ENCODE measurements at regions of chr20 and their contacts with region 1.

Region 1: DNA sequence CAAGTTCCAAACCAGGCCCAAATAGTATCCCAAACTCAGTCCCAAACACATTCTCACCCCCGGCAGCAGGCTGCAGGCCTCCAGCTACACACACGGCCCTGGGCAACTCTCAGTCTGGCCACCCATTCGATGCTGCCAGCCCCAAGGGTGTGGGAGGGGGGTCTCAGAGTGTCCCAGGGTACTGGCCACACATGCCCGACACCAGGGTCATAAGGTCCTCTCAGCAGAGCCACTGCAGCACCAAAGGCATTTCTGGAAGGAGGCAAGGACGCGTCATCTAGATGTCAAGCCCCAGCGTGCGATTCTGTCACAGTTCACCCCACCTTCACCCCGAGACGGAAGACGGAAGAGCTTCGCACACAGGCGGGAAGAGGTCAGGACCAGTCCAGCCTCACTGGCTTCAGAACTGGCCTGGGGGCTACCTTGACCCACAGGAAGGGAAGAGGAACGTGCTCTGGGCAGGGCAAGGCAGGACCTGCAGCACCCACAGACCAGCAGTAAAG is 9.5 kb downstream of the MYL9 start:
- DNase-seq: no peak
- ATAC-seq: no peak
- H3K4me3 ChIP-seq: no peak overlapping the region
- H3K27ac ChIP-seq: peak overlapping the region; percentile 29 to 54 (median 48)
- H3K4me1 ChIP-seq: no peaks in the 10 kb centered on the region
- H3K27me3 ChIP-seq: no peaks in the 10 kb centered on the region
- CTCF ChIP-seq: no peak
- POLR2A ChIP-seq: no peak

Region 2: DNA sequence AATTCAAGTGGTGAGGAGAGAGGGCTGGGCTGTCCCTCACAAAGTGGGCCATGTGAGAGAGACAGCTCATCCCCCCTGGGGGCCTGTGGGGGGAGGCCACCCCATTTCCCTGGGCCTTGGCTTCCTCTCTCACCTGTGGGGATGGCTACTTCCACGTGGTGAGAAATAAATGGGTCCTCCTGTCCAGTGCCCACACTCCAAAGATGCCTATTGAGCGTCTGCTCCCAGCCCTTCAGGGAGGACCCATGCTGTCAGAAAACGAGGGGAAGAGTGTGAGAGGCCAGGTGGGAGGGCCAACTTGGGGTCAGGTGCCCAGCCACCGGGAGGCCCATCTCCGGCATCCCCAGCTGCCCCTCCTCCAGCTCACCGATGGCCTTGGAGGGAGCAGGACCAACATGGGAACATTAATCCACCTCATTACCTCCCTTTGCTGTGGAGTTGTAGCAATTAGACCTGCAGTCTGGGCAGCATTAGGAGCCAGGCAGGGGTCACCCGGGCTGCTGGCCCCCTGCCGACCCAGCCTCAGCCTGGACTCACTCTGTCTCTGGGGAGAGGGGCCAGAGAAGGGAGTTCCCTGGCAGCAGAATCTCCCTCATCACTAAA is 219.7 kb before region 1 on chr20:
- in situ Hi-C with region 1: no loop called
- intact Hi-C with region 1: no loop called
- DNase-seq: no peak
- ATAC-seq: no peak
- H3K4me3 ChIP-seq: no peak overlapping the region
- H3K27ac ChIP-seq: no peak overlapping the region
- H3K4me1 ChIP-seq: no peaks in the 10 kb centered on the region
- H3K27me3 ChIP-seq: peaks cover 17 to 37% (median 19%) of the 10 kb centered on the region in 3 donors
- CTCF ChIP-seq: no peak
- POLR2A ChIP-seq: no peak

Region 3: DNA sequence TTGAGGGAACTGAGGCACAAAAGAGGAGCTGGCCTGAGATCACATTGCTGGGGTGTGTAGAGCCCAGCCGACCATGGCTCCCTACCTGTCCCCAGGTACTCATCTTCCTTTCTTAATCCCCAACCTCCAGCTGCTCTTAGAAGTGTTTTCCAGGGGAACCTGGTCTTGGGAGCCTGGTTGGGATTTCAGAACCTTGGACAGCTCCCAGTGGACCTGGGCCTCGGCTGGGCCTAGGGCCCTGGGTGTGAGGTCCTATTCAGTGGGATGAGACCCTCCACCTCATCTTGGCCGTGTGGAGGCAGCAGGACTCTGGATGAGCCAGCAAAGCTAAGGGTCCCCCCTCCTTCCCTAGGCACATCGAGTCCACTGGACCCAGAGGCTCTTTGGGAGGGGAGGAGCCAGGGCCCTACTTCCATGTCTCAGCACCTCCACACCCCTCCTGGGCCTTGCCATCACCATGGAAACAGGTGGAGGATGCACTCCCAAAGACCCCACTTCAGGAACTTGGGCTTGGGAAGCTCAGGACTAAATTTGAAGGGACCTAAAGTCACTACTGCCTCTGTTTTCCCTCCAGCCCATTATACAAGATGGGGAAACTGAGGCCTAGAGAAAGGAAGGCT is 206.2 kb before region 1 on chr20:
- in situ Hi-C with region 1: no loop called
- intact Hi-C with region 1: no loop called
- DNase-seq: no peak
- ATAC-seq: no peak
- H3K4me3 ChIP-seq: no peak overlapping the region
- H3K27ac ChIP-seq: no peak overlapping the region
- H3K4me1 ChIP-seq: no peaks in the 10 kb centered on the region
- H3K27me3 ChIP-seq: peaks cover 1 to 13% (median 8%) of the 10 kb centered on the region in 3 donors
- CTCF ChIP-seq: no peak
- POLR2A ChIP-seq: no peak

Region 4: DNA sequence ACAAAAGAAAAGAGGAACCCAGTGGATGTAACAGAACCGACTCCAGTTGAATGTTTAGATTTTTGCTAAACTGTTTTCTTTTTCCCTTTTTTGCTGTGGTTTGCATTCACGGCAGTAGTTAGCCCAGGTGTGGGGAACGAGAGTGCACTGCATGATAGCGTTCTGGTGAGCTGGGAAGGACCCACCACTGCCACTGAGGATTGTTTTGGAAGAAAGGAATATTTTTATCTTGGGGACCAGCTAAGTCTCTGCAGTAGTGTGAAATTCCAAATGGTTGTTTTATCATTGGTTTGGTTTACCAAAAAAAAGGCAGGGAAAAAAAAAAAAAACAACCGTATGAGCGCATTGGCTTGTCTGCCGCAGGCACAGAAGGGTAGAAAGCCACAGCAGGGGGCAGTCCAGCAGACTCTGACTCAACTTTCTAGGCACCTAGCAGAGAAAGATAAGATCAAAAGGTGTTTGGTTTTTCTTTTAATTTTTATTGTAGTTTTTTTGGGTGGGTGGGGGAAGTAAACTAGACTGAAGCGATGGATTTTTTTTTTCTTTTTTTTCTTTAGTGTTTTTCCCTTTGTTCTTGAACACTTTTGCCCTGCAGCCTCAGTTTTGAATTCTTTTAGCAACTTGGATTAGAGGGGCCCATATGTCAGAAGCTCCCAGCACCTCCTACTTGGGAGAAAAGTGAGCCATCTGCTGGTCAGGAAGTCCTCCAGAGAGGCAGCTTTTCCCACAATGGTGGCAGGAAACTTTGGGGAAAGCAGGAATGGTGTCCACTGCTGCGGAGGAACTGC is 41.2 kb after region 1 on chr20:
- in situ Hi-C with region 1: no loop called
- intact Hi-C with region 1: loop called (anchors 5 kb)
- DNase-seq: no peak
- ATAC-seq: peak in 1 of 2 donors; percentile 21
- H3K4me3 ChIP-seq: no peak overlapping the region
- H3K27ac ChIP-seq: no peak overlapping the region
- H3K4me1 ChIP-seq: no peaks in the 10 kb centered on the region
- H3K27me3 ChIP-seq: no peaks in the 10 kb centered on the region
- CTCF ChIP-seq: peak in 4 of 5 experiments; percentile 13 to 47 (median 28)
- POLR2A ChIP-seq: no peak

Region 5: GRCh38 chr20:36886859-36887751 is 336.3 kb after region 1 on chr20:
- in situ Hi-C with region 1: no loop called
- intact Hi-C with region 1: loop called (anchors 10 kb)
- DNase-seq: peak; percentile 61 to 70
- ATAC-seq: peak; percentile 70 to 83
- H3K4me3 ChIP-seq: no peak overlapping the region
- H3K27ac ChIP-seq: peak overlapping the region in 1 of 4 donors; percentile 12
- H3K4me1 ChIP-seq: peaks cover 0 to 5% of the 10 kb centered on the region in 2 donors
- H3K27me3 ChIP-seq: no peaks in the 10 kb centered on the region
- CTCF ChIP-seq: peak; percentile 77 to 93 (median 85)
- POLR2A ChIP-seq: no peak

Region 6: DNA sequence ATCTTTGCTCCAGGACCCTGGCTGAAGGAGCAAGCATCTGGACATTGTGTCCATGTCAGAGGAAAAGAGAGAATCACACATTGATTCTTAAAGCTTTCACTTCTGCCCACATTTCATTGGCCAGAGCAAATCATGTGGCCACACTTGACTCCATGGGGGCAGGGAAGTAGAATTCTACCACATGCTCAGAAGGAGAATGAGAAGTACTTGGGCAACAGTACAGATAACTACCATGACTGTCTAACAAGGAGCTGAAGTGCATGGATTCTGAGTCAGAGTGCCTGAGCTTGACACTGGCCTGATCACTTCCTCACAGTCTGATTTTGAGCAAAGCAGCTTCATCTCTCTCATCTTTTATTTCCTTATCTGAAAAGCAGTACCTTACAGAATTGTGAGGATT is 672.2 kb after region 1 on chr20:
- in situ Hi-C with region 1: no loop called
- intact Hi-C with region 1: no loop called
- DNase-seq: peak in 1 of 2 donors; percentile 41
- ATAC-seq: peak; percentile 97 to 98
- H3K4me3 ChIP-seq: no peak overlapping the region
- H3K27ac ChIP-seq: peak overlapping the region; percentile 27 to 48 (median 46)
- H3K4me1 ChIP-seq: peaks cover 44 to 57% of the 10 kb centered on the region in 2 donors
- H3K27me3 ChIP-seq: no peaks in the 10 kb centered on the region
- CTCF ChIP-seq: no peak
- POLR2A ChIP-seq: no peak